ENCODE measurements at regions of chr11 and their contacts with region 1.

Region 1: GRCh38 chr11:8773916-8774539 is 91.4 kb downstream of the RPL27A start:
- DNase-seq: no peak
- ATAC-seq: no peak
- H3K4me3 ChIP-seq: no peak overlapping the region
- H3K27ac ChIP-seq: no peak overlapping the region
- H3K4me1 ChIP-seq: peaks cover 36% of the 10 kb centered on the region
- H3K27me3 ChIP-seq: no peaks in the 10 kb centered on the region
- CTCF ChIP-seq: no peak
- POLR2A ChIP-seq: no peak
- RAD21 ChIP-seq: no peak

Region 2: GRCh38 chr11:8807544-8808225 is 33.7 kb after region 1 on chr11:
- CTCF ChIA-PET with region 1: no interaction called
- POLR2A ChIA-PET with region 1: interaction called, 3 read pairs
- dilution Hi-C with region 1: no loop called
- in situ Hi-C with region 1: no loop called
- intact Hi-C with region 1: loop called (anchors 5 kb)
- DNase-seq: peak; percentile 93
- ATAC-seq: peak; percentile 52
- H3K4me3 ChIP-seq: no peak overlapping the region; the same call in 1 of the 2 replicates
- H3K27ac ChIP-seq: peak overlapping the region; percentile 90
- H3K4me1 ChIP-seq: peaks cover 37% of the 10 kb centered on the region
- H3K27me3 ChIP-seq: no peaks in the 10 kb centered on the region
- CTCF ChIP-seq: no peak
- POLR2A ChIP-seq: no peak
- RAD21 ChIP-seq: peak; percentile 17; the same call in 1 of the 2 replicates

Measured in IMR-90 (cell line).